Posterior vena cava (tissue), 2 donors: ENCODE measurements at regions of chr11 and their contacts with region 1.

Region 1: DNA sequence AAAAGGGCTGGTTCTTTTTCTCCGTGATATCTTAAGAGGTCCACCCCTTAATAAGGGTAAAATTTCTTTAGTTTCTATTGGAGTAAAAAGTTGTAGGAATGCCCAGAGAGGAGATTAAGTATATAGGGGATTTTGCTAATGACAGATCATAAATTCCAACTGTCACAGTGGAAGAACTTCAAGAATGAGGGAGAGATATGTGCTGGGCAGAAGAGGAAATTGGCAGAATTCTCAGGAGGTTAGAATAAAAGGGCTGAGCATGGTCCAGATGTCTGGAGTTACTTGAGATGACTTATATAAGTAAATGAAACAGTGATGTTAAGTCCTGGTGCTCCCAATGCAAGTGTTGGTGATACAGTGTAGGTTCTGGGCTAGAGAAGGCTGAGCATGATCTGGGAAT is 417.6 kb upstream of the ARHGAP42 start:
- DNase-seq: no peak

Region 2: GRCh38 chr11:100220801-100221200 is 48.7 kb before region 1 on chr11:
- intact Hi-C with region 1: no loop called
- DNase-seq: no peak

Region 3: GRCh38 chr11:100240025-100240539 is 29.4 kb before region 1 on chr11:
- intact Hi-C with region 1: loop called in 1 of 2 experiments (anchors 2 kb)
- DNase-seq: no peak

Region 4: GRCh38 chr11:100338144-100338965 is 68.8 kb after region 1 on chr11:
- intact Hi-C with region 1: no loop called
- DNase-seq: no peak